Naive thymus-derived CD4-positive, alpha-beta T cell (primary cell): ENCODE measurements at regions of chr14 and their contacts with region 1.

Region 1: DNA sequence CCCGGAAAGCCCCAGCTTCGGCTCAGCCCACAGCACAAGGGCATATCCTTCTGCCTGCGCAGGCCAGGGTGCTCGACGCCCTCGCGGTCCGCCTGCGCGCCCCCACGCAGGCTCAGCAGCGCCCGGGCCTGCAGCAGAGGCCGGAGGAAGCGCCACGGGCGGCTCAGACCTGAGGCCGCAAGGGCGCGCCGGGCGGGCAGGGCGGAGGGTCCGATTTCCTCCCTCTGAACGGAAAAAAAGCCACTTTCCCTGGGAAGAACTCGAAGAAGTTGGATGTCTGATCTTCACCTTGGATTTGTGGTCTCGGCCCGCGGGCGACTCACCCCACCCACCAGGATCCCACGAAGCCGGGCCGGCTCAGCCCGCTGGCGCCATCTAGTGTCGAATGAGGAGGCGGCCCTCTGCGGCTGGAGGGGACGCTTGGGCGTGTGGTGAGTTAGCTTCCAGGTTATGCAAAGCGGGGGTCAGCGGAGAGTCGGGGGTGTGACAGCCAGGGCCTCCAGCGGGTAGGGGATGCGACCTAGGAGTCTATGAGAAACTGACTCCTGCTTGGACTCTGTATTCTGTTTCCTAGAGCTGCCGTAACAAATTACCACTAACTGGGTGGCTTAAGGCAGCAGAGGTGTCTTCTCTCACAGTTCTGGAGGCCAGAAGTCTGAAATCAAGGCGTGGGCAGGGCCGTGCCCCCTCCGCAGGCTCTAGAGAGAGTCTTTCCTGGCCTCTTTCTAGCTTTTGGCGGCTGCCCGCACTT is 40.0 kb upstream of the SRSF5 start:
- DNase-seq: peak; percentile 56 to 88 (median 77)
- ATAC-seq: peak; percentile 94
- H3K4me3 ChIP-seq: peak overlapping the region; percentile 72
- H3K4me3 Mint-ChIP-seq: peak overlapping the region; percentile 20 to 81 (median 58)
- H3K27ac ChIP-seq: peak overlapping the region; percentile 46
- H3K27ac Mint-ChIP-seq: peak overlapping the region in 6 of 9 donors; percentile 27 to 79 (median 57)
- H3K4me1 ChIP-seq: peaks cover 0 to 11% of the 10 kb centered on the region in 2 donors
- H3K4me1 Mint-ChIP-seq: peaks cover 0 to 36% (median 13%) of the 10 kb centered on the region in 7 donors
- H3K27me3 ChIP-seq: no peaks in the 10 kb centered on the region
- H3K27me3 Mint-ChIP-seq: peaks cover 0 to under 1% (median 0%) of the 10 kb centered on the region in 5 donors

Region 2: DNA sequence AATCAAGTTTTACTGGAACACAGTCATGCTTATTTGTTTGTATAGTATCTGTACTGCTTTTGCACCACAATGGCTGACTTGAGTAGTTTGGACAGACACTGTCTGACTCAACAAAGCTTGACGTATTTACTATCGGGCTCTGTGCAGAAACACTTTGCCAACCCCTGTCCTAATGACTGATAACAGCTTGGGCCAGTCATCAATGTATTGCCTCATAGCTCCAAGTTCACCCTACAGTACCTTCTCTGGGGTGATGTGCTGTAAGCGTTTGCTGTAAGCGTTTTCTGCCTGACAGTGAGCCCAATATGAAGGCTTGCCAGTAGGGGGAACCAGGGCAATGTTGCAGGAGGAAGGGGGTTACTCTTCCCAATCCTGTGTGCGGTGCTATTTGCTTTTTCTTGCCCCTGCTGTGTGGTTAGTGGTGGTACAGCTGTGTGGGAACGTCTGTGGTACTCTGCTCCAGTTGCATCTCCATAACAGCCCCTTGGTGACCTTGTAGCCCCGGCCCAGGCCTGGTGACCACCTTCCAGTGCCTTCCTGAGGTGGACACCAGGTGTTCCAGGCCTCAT is 146.8 kb before region 1 on chr14:
- CTCF ChIA-PET with region 1: interaction called, 12 read pairs
- POLR2A ChIA-PET with region 1: interaction called, 3 read pairs
- intact Hi-C with region 1: loop called (anchors 1 kb)
- DNase-seq: no peak
- ATAC-seq: peak; percentile 37
- H3K4me3 ChIP-seq: no peak overlapping the region
- H3K4me3 Mint-ChIP-seq: no peak overlapping the region
- H3K27ac ChIP-seq: no peak overlapping the region
- H3K27ac Mint-ChIP-seq: no peak overlapping the region
- H3K4me1 ChIP-seq: no peaks in the 10 kb centered on the region
- H3K4me1 Mint-ChIP-seq: peaks cover 0 to 4% (median 0%) of the 10 kb centered on the region in 7 donors
- H3K27me3 ChIP-seq: no peaks in the 10 kb centered on the region
- H3K27me3 Mint-ChIP-seq: peaks cover 15 to 51% (median 16%) of the 10 kb centered on the region in 5 donors

Region 3: DNA sequence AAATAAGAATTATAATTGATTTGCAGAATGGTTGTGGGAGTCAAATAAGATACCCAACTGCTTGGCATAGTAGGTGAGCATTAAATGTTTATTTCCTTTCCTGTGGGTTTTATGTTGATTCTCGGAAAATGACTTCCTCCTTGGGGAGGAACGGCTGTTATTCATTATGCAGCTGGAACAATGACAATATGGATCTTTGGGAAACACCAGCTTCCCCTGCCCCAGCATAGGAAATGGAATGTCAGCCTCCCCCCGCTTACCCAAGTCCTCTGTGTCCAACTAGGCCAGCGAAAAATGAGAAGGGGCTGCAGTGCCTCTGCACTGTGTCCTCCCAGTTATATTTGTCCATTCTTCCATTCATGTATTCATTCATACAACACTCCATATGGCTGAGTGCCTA is 140.5 kb before region 1 on chr14:
- CTCF ChIA-PET with region 1: interaction called, 12 read pairs
- POLR2A ChIA-PET with region 1: interaction called, 3 read pairs
- intact Hi-C with region 1: loop called (anchors 1 kb)
- DNase-seq: no peak
- ATAC-seq: no peak
- H3K4me3 ChIP-seq: no peak overlapping the region
- H3K4me3 Mint-ChIP-seq: no peak overlapping the region
- H3K27ac ChIP-seq: no peak overlapping the region
- H3K27ac Mint-ChIP-seq: no peak overlapping the region
- H3K4me1 ChIP-seq: no peaks in the 10 kb centered on the region
- H3K4me1 Mint-ChIP-seq: peaks cover 0 to 7% (median 0%) of the 10 kb centered on the region in 7 donors
- H3K27me3 ChIP-seq: no peaks in the 10 kb centered on the region
- H3K27me3 Mint-ChIP-seq: peaks cover 0 to 9% (median 0%) of the 10 kb centered on the region in 5 donors

Region 4: GRCh38 chr14:69910871-69911270 is 183.9 kb after region 1 on chr14:
- CTCF ChIA-PET with region 1: no interaction called
- POLR2A ChIA-PET with region 1: no interaction called
- intact Hi-C with region 1: no loop called
- DNase-seq: no peak
- ATAC-seq: no peak
- H3K4me3 ChIP-seq: no peak overlapping the region
- H3K4me3 Mint-ChIP-seq: no peak overlapping the region
- H3K27ac ChIP-seq: no peak overlapping the region
- H3K27ac Mint-ChIP-seq: no peak overlapping the region
- H3K4me1 ChIP-seq: no peaks in the 10 kb centered on the region
- H3K4me1 Mint-ChIP-seq: peaks cover 0 to 6% (median 0%) of the 10 kb centered on the region in 7 donors
- H3K27me3 ChIP-seq: no peaks in the 10 kb centered on the region
- H3K27me3 Mint-ChIP-seq: peaks cover 5 to 23% (median 16%) of the 10 kb centered on the region in 5 donors

Region 5: DNA sequence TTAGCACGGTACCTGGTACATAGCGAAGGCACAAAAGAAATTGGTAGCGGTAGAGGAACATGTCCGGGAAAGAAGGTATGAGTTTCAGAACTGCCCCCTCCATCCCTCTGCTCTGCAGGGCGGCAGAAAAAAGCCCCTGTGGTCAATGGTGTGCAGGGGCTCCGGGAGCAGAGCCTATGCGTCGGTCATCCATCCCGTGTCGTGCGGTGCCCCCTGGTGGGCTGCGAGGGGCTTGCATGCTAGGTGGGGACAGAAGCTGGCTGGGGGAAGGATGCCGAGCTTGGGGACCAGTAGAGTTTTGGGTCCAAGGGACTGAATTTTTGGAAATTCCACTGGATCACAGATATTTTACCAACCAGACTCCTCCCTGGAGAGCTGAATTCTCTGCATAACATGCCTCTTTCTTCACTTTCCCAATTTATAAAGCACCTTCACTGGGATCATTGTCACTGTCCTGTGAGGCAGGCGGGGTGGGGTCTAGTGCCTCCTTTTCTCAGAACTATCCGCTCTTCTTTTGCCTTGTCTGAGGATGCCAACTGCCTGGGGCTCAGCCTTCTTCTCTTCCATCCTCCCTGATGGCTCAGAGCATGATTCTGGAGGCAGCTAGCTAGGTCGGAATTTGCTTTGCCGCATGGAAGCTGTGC is 301.0 kb after region 1 on chr14:
- CTCF ChIA-PET with region 1: interaction called, 3 read pairs
- POLR2A ChIA-PET with region 1: no interaction called
- intact Hi-C with region 1: loop called in 1 of 2 experiments (anchors 2 kb)
- DNase-seq: peak in 8 of 9 donors; percentile 18 to 74 (median 38)
- ATAC-seq: peak; percentile 61
- H3K4me3 ChIP-seq: no peak overlapping the region
- H3K4me3 Mint-ChIP-seq: no peak overlapping the region
- H3K27ac ChIP-seq: no peak overlapping the region
- H3K27ac Mint-ChIP-seq: no peak overlapping the region
- H3K4me1 ChIP-seq: no peaks in the 10 kb centered on the region
- H3K4me1 Mint-ChIP-seq: peaks cover 0 to 4% (median 0%) of the 10 kb centered on the region in 7 donors
- H3K27me3 ChIP-seq: no peaks in the 10 kb centered on the region
- H3K27me3 Mint-ChIP-seq: peaks cover 3 to 7% (median 6%) of the 10 kb centered on the region in 5 donors

Region 6: GRCh38 chr14:70239802-70240201 is 512.9 kb after region 1 on chr14:
- CTCF ChIA-PET with region 1: no interaction called
- POLR2A ChIA-PET with region 1: no interaction called
- intact Hi-C with region 1: no loop called
- DNase-seq: no peak
- ATAC-seq: no peak
- H3K4me3 ChIP-seq: no peak overlapping the region
- H3K4me3 Mint-ChIP-seq: no peak overlapping the region
- H3K27ac ChIP-seq: no peak overlapping the region
- H3K27ac Mint-ChIP-seq: no peak overlapping the region
- H3K4me1 ChIP-seq: no peaks in the 10 kb centered on the region
- H3K4me1 Mint-ChIP-seq: peaks cover 0 to 2% (median 0%) of the 10 kb centered on the region in 7 donors
- H3K27me3 ChIP-seq: no peaks in the 10 kb centered on the region
- H3K27me3 Mint-ChIP-seq: peaks cover 41 to 71% (median 44%) of the 10 kb centered on the region in 5 donors